IMR-90 (cell line): ENCODE measurements at regions of chr2 and their contacts with region 1.

Region 1: GRCh38 chr2:205685314-205686055 is 3.2 kb downstream of the NRP2 start:
- DNase-seq: peak; percentile 67
- ATAC-seq: peak; percentile 33
- H3K4me3 ChIP-seq: peak overlapping the region; percentile 90
- H3K27ac ChIP-seq: peak overlapping the region; percentile 90
- H3K4me1 ChIP-seq: peaks cover 12% of the 10 kb centered on the region
- H3K27me3 ChIP-seq: no peaks in the 10 kb centered on the region
- CTCF ChIP-seq: 0 out of 2 replicates have a peak, but pooled peaks have one; percentile 1
- POLR2A ChIP-seq: peak; percentile 1; the same call in 1 of the 2 replicates
- RAD21 ChIP-seq: no peak; the same call in 1 of the 2 replicates

Region 2: DNA sequence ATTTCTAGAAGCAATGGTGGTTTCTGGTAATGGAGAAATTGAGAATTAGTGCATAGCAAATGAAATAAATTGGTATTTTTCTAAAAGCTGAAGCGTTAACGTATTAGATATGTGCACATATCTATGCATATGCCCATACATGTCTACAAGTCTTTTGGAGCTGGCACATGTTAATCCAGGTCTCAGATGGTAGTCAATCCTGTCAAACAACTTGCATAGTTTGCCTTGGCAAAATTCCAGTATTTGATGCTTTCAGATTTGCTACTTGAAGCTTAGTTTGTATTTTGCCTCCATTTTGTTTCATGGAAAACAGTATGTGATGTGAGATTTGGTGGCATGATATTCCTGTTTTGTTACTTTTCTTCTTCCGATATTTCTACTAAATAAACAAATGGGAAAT is 835.6 kb before region 1 on chr2:
- CTCF ChIA-PET with region 1: no interaction called
- POLR2A ChIA-PET with region 1: no interaction called
- dilution Hi-C with region 1: no loop called
- in situ Hi-C with region 1: no loop called
- intact Hi-C with region 1: no loop called
- DNase-seq: no peak
- ATAC-seq: no peak
- H3K4me3 ChIP-seq: no peak overlapping the region
- H3K27ac ChIP-seq: no peak overlapping the region
- H3K4me1 ChIP-seq: no peaks in the 10 kb centered on the region
- H3K27me3 ChIP-seq: no peaks in the 10 kb centered on the region
- CTCF ChIP-seq: no peak
- POLR2A ChIP-seq: no peak
- RAD21 ChIP-seq: no peak

Region 3: GRCh38 chr2:205629027-205629817 is 56.3 kb before region 1 on chr2:
- CTCF ChIA-PET with region 1: no interaction called
- POLR2A ChIA-PET with region 1: no interaction called
- dilution Hi-C with region 1: no loop called
- in situ Hi-C with region 1: no loop called
- intact Hi-C with region 1: no loop called
- DNase-seq: no peak
- ATAC-seq: no peak
- H3K4me3 ChIP-seq: no peak overlapping the region
- H3K27ac ChIP-seq: no peak overlapping the region
- H3K4me1 ChIP-seq: no peaks in the 10 kb centered on the region; the same call in 1 of the 2 replicates
- H3K27me3 ChIP-seq: no peaks in the 10 kb centered on the region
- CTCF ChIP-seq: no peak
- POLR2A ChIP-seq: no peak
- RAD21 ChIP-seq: no peak

Region 4: DNA sequence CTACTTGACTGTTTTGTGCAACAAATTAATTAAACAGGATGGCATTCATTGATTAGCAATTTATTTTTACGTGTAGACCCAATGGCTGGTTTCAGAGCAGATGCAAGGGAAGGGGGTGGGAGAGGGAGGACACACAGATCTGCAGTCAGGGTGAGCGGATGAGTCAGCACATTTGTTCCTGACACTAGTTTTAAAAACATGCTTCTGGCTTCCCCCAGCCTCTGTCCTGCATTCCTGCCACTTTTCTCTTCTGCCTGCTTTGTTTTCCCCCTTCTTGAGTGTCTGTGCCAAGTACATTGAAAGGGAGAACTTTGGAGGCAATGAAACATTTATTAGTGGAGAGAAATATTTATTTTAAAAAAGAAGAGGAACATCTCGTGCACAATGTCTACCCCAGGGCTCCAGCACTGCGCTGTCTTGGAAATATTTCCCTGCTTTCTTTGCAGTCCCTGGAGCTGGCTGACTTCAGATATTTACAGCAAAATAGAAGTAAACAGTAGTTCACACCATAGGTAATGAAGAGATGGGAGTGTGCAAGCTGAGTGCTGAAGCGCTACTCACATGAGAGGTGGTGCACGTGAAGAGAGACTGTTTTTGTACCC is 49.1 kb after region 1 on chr2:
- CTCF ChIA-PET with region 1: no interaction called
- POLR2A ChIA-PET with region 1: no interaction called
- dilution Hi-C with region 1: no loop called
- in situ Hi-C with region 1: loop called (anchors 5 kb)
- intact Hi-C with region 1: loop called (anchors 1 kb)
- DNase-seq: peak; percentile 90
- ATAC-seq: peak; percentile 70
- H3K4me3 ChIP-seq: no peak overlapping the region
- H3K27ac ChIP-seq: peak overlapping the region; percentile 75; the same call in 1 of the 2 replicates
- H3K4me1 ChIP-seq: peaks cover 33% of the 10 kb centered on the region
- H3K27me3 ChIP-seq: no peaks in the 10 kb centered on the region
- CTCF ChIP-seq: no peak
- POLR2A ChIP-seq: no peak
- RAD21 ChIP-seq: no peak

Region 5: GRCh38 chr2:205754924-205755321 is 69.4 kb after region 1 on chr2:
- CTCF ChIA-PET with region 1: no interaction called
- POLR2A ChIA-PET with region 1: no interaction called
- dilution Hi-C with region 1: no loop called
- in situ Hi-C with region 1: loop called (anchors 5 kb)
- intact Hi-C with region 1: no loop called
- DNase-seq: peak; percentile 30
- ATAC-seq: peak; percentile 8; the same call in 1 of the 2 replicates
- H3K4me3 ChIP-seq: no peak overlapping the region
- H3K27ac ChIP-seq: no peak overlapping the region; the same call in 1 of the 2 replicates
- H3K4me1 ChIP-seq: peaks cover 29% of the 10 kb centered on the region
- H3K27me3 ChIP-seq: no peaks in the 10 kb centered on the region
- CTCF ChIP-seq: no peak
- POLR2A ChIP-seq: no peak
- RAD21 ChIP-seq: no peak

Region 6: DNA sequence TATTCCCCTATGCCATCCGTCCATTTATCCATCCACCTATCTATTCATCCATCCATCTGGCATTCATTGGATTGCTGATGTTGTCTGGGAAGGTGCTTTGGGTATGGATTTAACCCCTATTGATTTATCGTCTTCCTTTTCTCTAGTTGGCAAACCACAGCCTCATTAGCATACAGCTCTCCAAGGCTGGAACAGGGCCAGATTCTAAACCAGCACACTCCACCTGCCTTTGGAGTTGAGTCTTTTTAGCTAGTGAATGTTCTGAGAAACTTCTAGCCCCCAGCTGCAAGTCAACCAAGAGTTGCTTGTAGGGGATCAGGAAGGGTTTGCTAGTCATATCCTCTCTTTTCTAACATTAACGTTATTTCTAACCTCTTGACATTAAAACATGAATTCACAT is 87.5 kb after region 1 on chr2:
- CTCF ChIA-PET with region 1: no interaction called
- POLR2A ChIA-PET with region 1: no interaction called
- dilution Hi-C with region 1: no loop called
- in situ Hi-C with region 1: no loop called
- intact Hi-C with region 1: no loop called
- DNase-seq: no peak
- ATAC-seq: no peak
- H3K4me3 ChIP-seq: no peak overlapping the region
- H3K27ac ChIP-seq: no peak overlapping the region
- H3K4me1 ChIP-seq: peaks cover 34% of the 10 kb centered on the region
- H3K27me3 ChIP-seq: peaks cover 8% of the 10 kb centered on the region
- CTCF ChIP-seq: no peak
- POLR2A ChIP-seq: no peak
- RAD21 ChIP-seq: no peak

Region 7: DNA sequence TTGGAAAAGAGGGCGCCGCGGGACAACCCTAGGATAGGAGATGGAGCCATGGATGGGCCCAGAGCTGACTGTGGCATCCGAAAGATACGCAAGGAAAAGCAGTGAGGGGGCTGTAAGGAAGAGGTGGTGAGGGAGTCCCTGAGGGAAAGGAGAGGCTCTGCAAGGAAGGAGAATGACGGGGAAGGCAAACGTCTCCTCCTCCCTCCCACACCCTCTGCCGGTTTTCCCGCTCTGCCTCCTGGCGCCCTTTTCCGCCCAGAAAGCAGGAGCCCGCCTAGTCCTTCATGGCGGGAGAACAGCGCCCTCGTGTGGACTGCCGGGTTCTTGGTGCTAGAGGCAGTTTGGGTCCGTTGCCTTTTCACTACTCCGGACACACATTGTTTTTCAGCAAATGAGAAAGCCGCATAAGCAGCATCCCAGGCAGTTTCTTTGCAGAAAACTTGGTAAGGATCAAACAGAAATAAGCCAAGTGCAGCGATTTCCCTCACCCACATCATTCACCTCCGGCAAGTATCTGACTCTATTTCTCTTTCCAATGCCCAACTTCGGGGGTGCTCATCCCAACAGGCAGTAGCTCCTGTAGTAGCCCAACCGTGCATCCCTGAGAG is 200.1 kb after region 1 on chr2:
- CTCF ChIA-PET with region 1: no interaction called
- POLR2A ChIA-PET with region 1: no interaction called
- dilution Hi-C with region 1: no loop called
- in situ Hi-C with region 1: loop called (anchors 5 kb)
- intact Hi-C with region 1: loop called (anchors 1 kb)
- DNase-seq: peak; percentile 72
- ATAC-seq: peak; percentile 94
- H3K4me3 ChIP-seq: no peak overlapping the region
- H3K27ac ChIP-seq: no peak overlapping the region
- H3K4me1 ChIP-seq: no peaks in the 10 kb centered on the region
- H3K27me3 ChIP-seq: peaks cover 6% of the 10 kb centered on the region
- CTCF ChIP-seq: peak; percentile 93
- POLR2A ChIP-seq: no peak
- RAD21 ChIP-seq: peak; percentile 95